ENCODE measurements at regions of chr10 and their contacts with region 1.

Region 1: DNA sequence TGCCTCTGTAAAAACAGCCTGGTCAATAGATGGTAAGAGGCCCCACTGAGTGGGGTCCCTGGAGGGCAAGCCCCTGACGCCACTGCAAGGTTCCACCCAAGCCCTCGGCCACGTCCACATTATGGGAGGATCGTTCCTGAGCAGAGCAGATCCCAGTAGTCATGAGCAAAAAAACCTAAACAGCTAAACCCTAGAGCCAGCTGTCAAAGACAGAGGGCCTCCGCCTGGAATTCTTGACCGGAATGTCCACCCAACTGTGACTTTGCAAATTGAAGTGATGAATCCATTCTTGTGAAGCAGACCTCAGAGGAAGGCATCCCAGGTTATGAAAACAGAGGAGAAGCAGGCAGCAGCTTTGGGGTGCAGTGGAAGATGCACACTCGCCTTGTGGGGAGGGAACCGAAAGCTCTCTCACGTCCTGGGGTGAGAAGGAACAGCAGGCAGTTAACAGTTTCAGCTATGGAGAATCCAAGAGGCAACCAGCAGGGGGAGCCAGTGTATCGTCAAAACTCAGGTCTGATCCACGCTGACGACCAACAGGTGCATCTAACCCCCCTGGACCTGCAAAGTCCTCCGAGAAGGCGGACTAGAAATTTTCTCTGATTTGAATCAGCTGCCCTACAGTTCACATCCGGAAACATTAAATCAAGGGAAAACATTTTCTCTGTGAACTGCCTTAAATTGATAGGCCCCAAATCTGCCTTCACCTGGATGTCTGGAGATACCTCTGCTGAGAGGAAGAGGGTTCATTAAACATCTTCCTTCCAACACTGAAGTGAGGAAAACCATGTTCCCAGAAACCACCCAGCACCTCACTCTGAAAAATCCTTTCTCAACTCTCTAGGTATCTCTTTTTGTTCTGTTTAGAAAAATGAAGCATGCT is 139.1 kb upstream of the PFKP start:
- DNase-seq: peak in 4 of 5 donors; percentile 47 to 67 (median 60)
- ATAC-seq: peak in 3 of 4 donors; percentile 73 to 83 (median 82)
- H3K4me3 ChIP-seq: no peak overlapping the region
- H3K27ac ChIP-seq: no peak overlapping the region
- H3K4me1 ChIP-seq: peaks cover 0 to 11% (median 0%) of the 10 kb centered on the region in 12 donors
- H3K27me3 ChIP-seq: peaks cover 0 to 27% (median 3%) of the 10 kb centered on the region in 9 donors
- CTCF ChIP-seq: peak; percentile 53 to 72 (median 66)
- POLR2A ChIP-seq: no peak

Region 2: GRCh38 chr10:3036155-3037021 is 108.2 kb after region 1 on chr10:
- intact Hi-C with region 1: loop called in 5 of 10 experiments (anchors 5 kb)
- DNase-seq: no peak
- ATAC-seq: peak in 2 of 4 donors; percentile 20 to 32
- H3K4me3 ChIP-seq: no peak overlapping the region
- H3K27ac ChIP-seq: no peak overlapping the region
- H3K4me1 ChIP-seq: peaks cover 0 to 8% (median 0%) of the 10 kb centered on the region in 12 donors
- H3K27me3 ChIP-seq: peaks cover 0 to 10% (median 0%) of the 10 kb centered on the region in 9 donors
- CTCF ChIP-seq: no peak
- POLR2A ChIP-seq: no peak

Region 3: GRCh38 chr10:3136763-3137611 is 208.8 kb after region 1 on chr10:
- intact Hi-C with region 1: loop called in 1 of 10 experiments (anchors 10 kb)
- DNase-seq: peak; percentile 59 to 84 (median 80)
- ATAC-seq: peak; percentile 59 to 83 (median 78)
- H3K4me3 ChIP-seq: no peak overlapping the region
- H3K27ac ChIP-seq: peak overlapping the region in 10 of 12 donors; percentile 17 to 70 (median 52)
- H3K4me1 ChIP-seq: peaks cover 0 to 38% (median 17%) of the 10 kb centered on the region in 12 donors
- H3K27me3 ChIP-seq: no peaks in the 10 kb centered on the region
- CTCF ChIP-seq: no peak
- POLR2A ChIP-seq: no peak